Sigmoid colon (tissue), 7 donors: ENCODE measurements at regions of chr3 and their contacts with region 1.

Region 1: DNA sequence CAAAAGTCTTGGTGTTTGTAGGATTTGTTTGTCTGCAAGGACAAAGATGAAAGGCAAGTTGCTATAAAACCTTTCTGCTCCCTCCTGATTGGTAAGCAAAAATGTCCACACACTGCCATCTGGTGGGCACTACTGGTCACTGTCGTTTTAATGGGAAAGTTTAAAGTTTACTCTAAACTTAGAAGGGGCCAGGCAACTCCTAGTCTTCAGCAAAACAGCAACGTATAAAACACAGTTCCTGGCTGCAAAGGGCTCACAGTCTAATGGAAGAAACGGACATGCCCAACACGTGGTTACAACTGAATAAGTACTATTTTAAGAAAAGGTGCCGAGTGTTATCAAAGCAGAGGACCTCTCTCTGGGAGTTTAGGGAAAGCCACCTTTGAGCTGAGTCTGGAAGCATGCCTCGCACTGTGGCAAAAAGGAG is 23.7 kb upstream of the TPRG1 start:
- DNase-seq: peak; percentile 82
- H3K4me3 ChIP-seq: no peak overlapping the region
- H3K27ac ChIP-seq: no peak overlapping the region
- H3K4me1 ChIP-seq: peaks cover 0 to 10% (median 4%) of the 10 kb centered on the region in 4 donors
- H3K27me3 ChIP-seq: no peaks in the 10 kb centered on the region
- CTCF ChIP-seq: peak; percentile 32 to 79 (median 76)
- EP300 ChIP-seq: no peak
- POLR2A ChIP-seq: no peak

Region 2: GRCh38 chr3:188954590-188955208 is 193.4 kb before region 1 on chr3:
- intact Hi-C with region 1: loop called (anchors 5 kb)
- DNase-seq: peak; percentile 94
- H3K4me3 ChIP-seq: no peak overlapping the region
- H3K27ac ChIP-seq: peak overlapping the region in 2 of 4 donors; percentile 27 to 38
- H3K4me1 ChIP-seq: peaks cover 0 to 37% (median 26%) of the 10 kb centered on the region in 4 donors
- H3K27me3 ChIP-seq: no peaks in the 10 kb centered on the region
- CTCF ChIP-seq: peak; percentile 91 to 96 (median 94)
- EP300 ChIP-seq: no peak
- POLR2A ChIP-seq: no peak

Region 3: GRCh38 chr3:188974856-188975599 is 173.1 kb before region 1 on chr3:
- intact Hi-C with region 1: loop called (anchors 5 kb)
- DNase-seq: no peak
- H3K4me3 ChIP-seq: peak overlapping the region in 1 of 4 donors; percentile 1
- H3K27ac ChIP-seq: peak overlapping the region in 3 of 4 donors; percentile 12 to 34 (median 17)
- H3K4me1 ChIP-seq: peaks cover 0 to 14% (median 5%) of the 10 kb centered on the region in 4 donors
- H3K27me3 ChIP-seq: no peaks in the 10 kb centered on the region
- CTCF ChIP-seq: no peak
- EP300 ChIP-seq: no peak
- POLR2A ChIP-seq: no peak